Dorsolateral prefrontal cortex (tissue), 120 donors: ENCODE measurements at regions of chr2 and their contacts with region 1.

Region 1: GRCh38 chr2:235493775-235494715 is at the start of gene AGAP1:
- DNase-seq: peak; percentile 83 to 94 (median 89)
- H3K4me3 ChIP-seq: peak within 1 kb of the TSS; percentile 58 to 85 (median 78)
- H3K27ac ChIP-seq: peak within 1 kb of the TSS in 57 of 59 donors; percentile 39 to 93 (median 81)
- H3K27me3 ChIP-seq: no peaks in the 10 kb centered on the region
- CTCF ChIP-seq: peak in 9 of 56 donors; percentile 11 to 41 (median 19)
- total RNA-seq, gene AGAP1: 141 to 246 (median 193) TPM

Region 2: GRCh38 chr2:234611209-234611608 is 882.8 kb before region 1 on chr2:
- intact Hi-C with region 1: no loop called
- DNase-seq: no peak
- H3K4me3 ChIP-seq: no peak overlapping the region
- H3K27ac ChIP-seq: no peak overlapping the region
- H3K27me3 ChIP-seq: peaks cover 0 to 18% (median 0%) of the 10 kb centered on the region in 45 donors
- CTCF ChIP-seq: peak in 10 of 56 donors; percentile 10 to 27 (median 20)

Region 3: DNA sequence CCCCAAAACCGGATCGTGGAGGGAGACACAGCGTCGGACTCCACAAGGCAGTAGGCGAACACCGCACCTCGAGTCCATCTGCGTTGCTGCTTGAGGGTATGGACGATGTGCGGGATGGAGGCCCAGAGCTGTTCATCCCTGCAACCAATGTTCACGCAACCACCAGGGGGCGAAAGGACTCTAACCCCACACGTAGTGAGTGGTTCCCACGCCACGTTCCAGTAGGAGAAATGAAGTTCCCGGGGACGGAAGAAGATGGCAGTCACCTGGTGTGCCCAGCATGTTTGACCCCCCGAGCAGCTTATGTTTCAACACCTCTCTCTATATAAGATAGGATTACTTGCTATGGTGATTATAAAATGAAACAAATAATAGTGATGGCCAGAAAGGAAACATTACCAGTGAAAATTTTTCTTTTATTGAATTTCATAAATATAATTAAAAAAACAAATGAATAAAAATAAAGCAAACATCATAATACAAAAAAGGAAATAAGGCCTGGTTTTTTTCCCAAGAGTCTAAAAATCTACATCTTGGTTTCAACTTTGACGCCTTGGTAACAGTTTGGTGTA is 358.0 kb before region 1 on chr2:
- intact Hi-C with region 1: loop called (anchors 5 to 10 kb)
- DNase-seq: peak; percentile 56 to 88 (median 78)
- H3K4me3 ChIP-seq: peak overlapping the region in 1 of 59 donors; percentile 28
- H3K27ac ChIP-seq: no peak overlapping the region
- H3K27me3 ChIP-seq: peaks cover 0 to 3% (median 0%) of the 10 kb centered on the region in 45 donors
- CTCF ChIP-seq: peak; percentile 51 to 88 (median 75)

Region 4: GRCh38 chr2:235433860-235434259 is 60.2 kb before region 1 on chr2:
- intact Hi-C with region 1: loop called (anchors 5 kb)
- DNase-seq: peak in 7 of 10 donors; percentile 44 to 83 (median 61)
- H3K4me3 ChIP-seq: peak overlapping the region in 26 of 59 donors; percentile 0 to 55 (median 28)
- H3K27ac ChIP-seq: peak overlapping the region in 44 of 59 donors; percentile 0 to 77 (median 36)
- H3K27me3 ChIP-seq: no peaks in the 10 kb centered on the region
- CTCF ChIP-seq: peak in 52 of 56 donors; percentile 9 to 72 (median 41)

Region 5: DNA sequence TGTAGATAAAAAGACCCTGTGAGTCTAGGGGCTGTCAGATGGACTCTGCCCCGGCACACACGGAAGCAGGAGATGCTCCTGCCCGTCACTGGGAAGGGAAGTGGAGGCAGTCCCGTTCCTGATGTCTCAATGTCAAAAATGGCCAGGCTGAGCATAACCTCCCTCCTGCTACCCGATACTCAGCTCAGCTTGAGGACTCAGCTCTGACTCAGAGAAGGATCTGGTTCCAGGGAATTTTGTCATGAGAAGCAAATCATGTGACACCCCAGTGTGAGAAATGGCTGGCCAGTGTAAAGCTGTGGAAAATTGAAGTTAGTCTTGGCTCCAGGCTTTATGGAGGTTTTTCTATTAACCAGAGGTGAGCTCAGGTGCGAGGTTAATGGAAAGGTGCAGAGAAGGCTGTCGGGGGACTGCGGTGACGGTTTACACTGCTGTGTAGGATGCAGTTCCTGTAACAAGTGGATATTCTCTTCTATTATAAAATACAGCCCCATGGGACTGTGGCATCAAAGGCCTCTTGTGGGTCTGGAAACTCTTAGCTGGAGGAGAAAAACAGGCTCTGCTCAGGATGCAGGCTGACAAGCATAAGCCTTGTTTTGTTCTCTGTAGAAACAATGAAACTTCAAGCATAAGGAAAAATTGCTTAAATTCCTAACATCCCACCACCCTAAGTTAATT is 24.9 kb before region 1 on chr2:
- intact Hi-C with region 1: loop called in 1 of 2 experiments (anchors 2 kb)
- DNase-seq: peak in 3 of 10 donors; percentile 35 to 46 (median 36)
- H3K4me3 ChIP-seq: peak overlapping the region in 9 of 59 donors; percentile 4 to 38 (median 24)
- H3K27ac ChIP-seq: peak overlapping the region in 58 of 59 donors; percentile 48 to 95 (median 85)
- H3K27me3 ChIP-seq: no peaks in the 10 kb centered on the region
- CTCF ChIP-seq: peak in 1 of 56 donors; percentile 14

Region 6: DNA sequence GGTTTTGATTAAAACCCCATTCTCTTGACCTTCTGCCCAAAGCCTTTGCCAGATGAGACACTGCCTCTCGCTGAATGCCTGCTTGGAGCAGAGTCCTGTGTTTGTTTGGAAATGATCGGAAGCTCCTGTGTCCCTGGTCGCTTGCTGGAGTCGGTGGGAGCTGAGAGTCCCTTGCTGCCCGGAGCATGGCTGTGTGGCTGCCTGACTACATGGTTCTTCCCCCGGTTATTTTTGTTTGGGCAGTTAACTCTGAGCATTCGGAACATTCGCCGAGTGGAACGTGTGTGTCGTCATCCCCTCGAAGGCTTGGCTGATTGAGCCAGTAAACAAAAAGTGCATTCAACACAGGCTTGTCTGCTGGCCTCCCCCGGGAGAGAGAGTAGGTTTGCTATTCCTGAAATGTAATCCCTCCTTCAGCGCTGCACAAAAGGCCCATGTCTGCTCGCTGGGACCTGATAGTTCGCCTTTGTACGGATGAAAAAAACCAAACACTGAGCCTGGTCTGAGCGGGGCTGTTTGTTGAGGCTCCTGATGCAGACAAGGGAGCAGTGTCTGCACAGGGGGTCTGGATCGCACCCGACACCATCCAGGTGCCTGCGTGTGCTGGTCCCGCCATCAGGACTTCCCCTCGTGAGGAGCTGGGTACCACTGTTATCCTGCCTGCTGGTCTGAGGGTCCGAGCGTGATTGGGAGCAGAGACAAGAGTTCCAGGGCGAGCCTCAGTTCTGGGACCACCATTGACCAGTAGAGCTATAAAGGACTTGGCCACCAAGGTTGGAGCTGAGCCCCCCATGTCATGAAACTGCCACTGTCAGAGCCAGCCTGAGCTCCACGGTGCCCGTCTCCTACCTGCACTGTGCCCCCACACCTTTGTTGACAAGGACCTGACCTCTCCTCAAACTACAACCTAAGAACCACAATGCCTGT is 83.6 kb after region 1 on chr2:
- intact Hi-C with region 1: loop called in 1 of 2 experiments (anchors 5 kb)
- DNase-seq: peak; percentile 12 to 85 (median 76)
- H3K4me3 ChIP-seq: peak overlapping the region in 56 of 59 donors; percentile 1 to 62 (median 38)
- H3K27ac ChIP-seq: peak overlapping the region; percentile 23 to 99 (median 95)
- H3K27me3 ChIP-seq: no peaks in the 10 kb centered on the region
- CTCF ChIP-seq: peak in 7 of 56 donors; percentile 8 to 31 (median 11)

Region 7: GRCh38 chr2:235669269-235669831 is 175.3 kb after region 1 on chr2:
- intact Hi-C with region 1: loop called (anchors 2 to 10 kb)
- DNase-seq: peak; percentile 63 to 87 (median 74)
- H3K4me3 ChIP-seq: peak overlapping the region in 56 of 59 donors; percentile 27 to 84 (median 66)
- H3K27ac ChIP-seq: peak overlapping the region in 41 of 59 donors; percentile 37 to 87 (median 65)
- H3K27me3 ChIP-seq: no peaks in the 10 kb centered on the region
- CTCF ChIP-seq: peak in 17 of 56 donors; percentile 6 to 37 (median 23)

Region 8: DNA sequence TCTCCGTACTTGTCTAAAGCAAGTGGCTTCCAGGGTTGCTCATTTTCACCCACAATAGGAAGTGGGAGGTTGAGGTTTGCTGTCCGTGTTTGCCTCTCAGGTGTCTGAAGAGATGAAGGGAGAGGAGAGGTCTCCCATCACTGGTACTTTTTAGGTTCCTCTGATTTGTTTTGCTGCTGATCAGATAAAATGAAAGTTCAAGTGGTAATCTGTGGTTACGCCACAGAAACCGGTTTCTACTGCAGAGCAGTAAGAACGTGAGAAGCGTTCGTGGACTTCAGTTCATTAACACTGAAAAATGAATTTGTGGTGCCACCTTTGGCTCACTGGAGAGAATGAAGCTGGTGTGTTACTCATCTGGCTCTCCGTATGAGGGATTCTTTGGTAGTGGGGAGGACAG is 555.9 kb after region 1 on chr2:
- intact Hi-C with region 1: no loop called
- DNase-seq: no peak
- H3K4me3 ChIP-seq: no peak overlapping the region
- H3K27ac ChIP-seq: no peak overlapping the region
- H3K27me3 ChIP-seq: no peaks in the 10 kb centered on the region
- CTCF ChIP-seq: no peak